Panc1 (cell line): ENCODE measurements at regions of chr2 and their contacts with region 1.

Region 1: GRCh38 chr2:231642631-231643494 is 50.2 kb downstream of the TEX44 start:
- DNase-seq: peak; percentile 88
- ATAC-seq: peak; percentile 94
- H3K4me3 ChIP-seq: peak overlapping the region; percentile 24 to 48; a peak in 3 of 4 replicates
- H3K27ac ChIP-seq: peak overlapping the region; percentile 91
- H3K4me1 ChIP-seq: peaks cover 39% of the 10 kb centered on the region
- H3K27me3 ChIP-seq: no peaks in the 10 kb centered on the region
- CTCF ChIP-seq: no peak

Region 2: DNA sequence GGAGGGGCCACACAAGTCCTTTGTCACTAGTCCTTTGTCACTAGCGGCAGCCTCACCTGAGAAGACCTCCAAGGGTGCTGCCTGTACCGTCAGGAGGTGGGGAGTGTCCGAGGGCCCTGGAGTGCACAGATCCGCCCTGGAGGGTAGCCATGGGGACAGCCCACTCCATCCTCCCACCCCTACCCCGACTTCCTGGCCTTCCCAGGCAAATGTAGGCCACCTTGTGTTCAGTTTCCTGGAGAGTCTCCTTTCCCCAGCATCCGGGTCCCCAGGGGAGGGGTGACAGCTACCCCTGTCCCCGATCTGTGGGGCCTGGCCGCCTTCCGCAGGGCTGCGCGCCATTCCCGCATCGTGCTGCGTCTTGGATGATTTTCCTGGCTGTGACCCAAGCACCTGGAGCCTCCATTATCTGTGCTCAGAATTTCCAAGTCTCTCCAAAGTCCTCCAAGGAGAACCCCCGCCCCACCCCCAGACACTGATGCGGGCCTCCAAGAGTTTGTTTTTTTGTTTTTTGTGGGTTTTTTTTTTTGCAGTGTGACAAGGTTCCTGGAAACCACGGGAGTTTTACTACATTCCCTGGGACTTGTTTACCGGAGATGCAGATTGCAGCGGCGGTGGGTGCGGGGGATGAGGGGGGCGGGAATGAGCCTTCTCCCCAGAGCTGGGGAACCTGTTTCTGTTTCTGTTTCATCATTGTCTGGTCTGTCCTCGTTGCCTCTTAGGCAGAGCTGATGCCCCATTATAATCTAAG is 21.6 kb before region 1 on chr2:
- CTCF ChIA-PET with region 1: interaction called, 11 read pairs
- POLR2A ChIA-PET with region 1: no interaction called
- in situ Hi-C with region 1: no loop called
- intact Hi-C with region 1: no loop called
- DNase-seq: no peak
- ATAC-seq: peak; percentile 54
- H3K4me3 ChIP-seq: peak overlapping the region; percentile 10 to 29; a peak in 3 of 4 replicates
- H3K27ac ChIP-seq: peak overlapping the region; percentile 83
- H3K4me1 ChIP-seq: peaks cover 42% of the 10 kb centered on the region
- H3K27me3 ChIP-seq: no peaks in the 10 kb centered on the region
- CTCF ChIP-seq: no peak

Region 3: DNA sequence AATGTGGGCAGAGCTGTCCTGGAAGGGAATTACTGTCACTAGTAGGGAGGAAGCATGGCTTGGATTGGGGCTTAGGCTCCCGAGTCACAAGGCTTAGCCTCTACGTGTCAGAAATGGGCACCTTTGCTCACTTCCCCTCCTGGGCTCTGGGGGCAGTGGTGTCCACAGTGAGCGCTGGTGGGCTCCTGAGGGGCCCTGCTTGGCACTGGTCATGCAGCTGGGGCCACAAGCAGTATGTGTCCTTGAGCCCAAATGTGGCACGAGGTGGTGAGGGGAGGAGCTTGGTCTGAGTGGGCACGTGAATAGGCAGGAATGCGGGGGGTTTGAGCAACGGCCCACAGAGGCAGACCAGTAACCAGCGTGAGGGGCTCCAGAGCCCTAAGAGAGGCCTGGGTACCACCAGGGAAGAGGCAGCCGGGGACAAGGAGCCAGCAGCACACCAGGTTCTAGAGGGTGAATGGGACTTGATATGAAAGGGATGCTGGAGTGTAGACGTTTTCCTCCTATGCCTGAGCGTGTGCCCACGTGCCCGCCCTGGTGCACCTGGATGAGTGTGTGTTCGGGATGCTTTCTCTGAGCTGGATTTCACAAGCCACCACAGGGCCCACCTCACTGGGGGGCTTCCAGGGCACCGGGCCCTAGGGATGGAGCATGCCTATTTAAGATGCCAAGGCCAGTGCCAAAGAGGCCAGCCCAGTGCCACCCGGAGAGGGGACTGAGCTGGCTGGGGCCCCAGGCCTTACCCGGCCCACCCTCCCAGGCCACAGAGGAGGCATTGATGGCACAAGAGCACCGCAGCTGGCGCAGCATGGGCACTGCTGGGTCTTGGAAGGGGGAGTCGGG is 42.7 kb after region 1 on chr2:
- CTCF ChIA-PET with region 1: interaction called, 11 read pairs
- POLR2A ChIA-PET with region 1: no interaction called
- in situ Hi-C with region 1: no loop called
- intact Hi-C with region 1: no loop called
- DNase-seq: no peak
- ATAC-seq: 0 out of 2 replicates have a peak, but pooled peaks have one; percentile 10
- H3K4me3 ChIP-seq: no peak overlapping the region
- H3K27ac ChIP-seq: no peak overlapping the region
- H3K4me1 ChIP-seq: peaks cover 5% of the 10 kb centered on the region
- H3K27me3 ChIP-seq: no peaks in the 10 kb centered on the region
- CTCF ChIP-seq: peak; percentile 56

Region 4: GRCh38 chr2:231810905-231811304 is 168.0 kb after region 1 on chr2:
- CTCF ChIA-PET with region 1: no interaction called
- POLR2A ChIA-PET with region 1: no interaction called
- in situ Hi-C with region 1: no loop called
- intact Hi-C with region 1: no loop called
- DNase-seq: no peak
- ATAC-seq: peak; percentile 44; the same call in 1 of the 2 replicates
- H3K4me3 ChIP-seq: no peak overlapping the region
- H3K27ac ChIP-seq: no peak overlapping the region
- H3K4me1 ChIP-seq: no peaks in the 10 kb centered on the region
- H3K27me3 ChIP-seq: no peaks in the 10 kb centered on the region
- CTCF ChIP-seq: no peak

Region 5: GRCh38 chr2:231940795-231941194 is 297.9 kb after region 1 on chr2:
- CTCF ChIA-PET with region 1: no interaction called
- POLR2A ChIA-PET with region 1: no interaction called
- in situ Hi-C with region 1: no loop called
- intact Hi-C with region 1: no loop called
- DNase-seq: no peak
- ATAC-seq: no peak
- H3K4me3 ChIP-seq: no peak overlapping the region
- H3K27ac ChIP-seq: no peak overlapping the region
- H3K4me1 ChIP-seq: no peaks in the 10 kb centered on the region
- H3K27me3 ChIP-seq: 0 out of 2 replicates have a peak, but pooled peaks cover 2% of the 10 kb centered on the region
- CTCF ChIP-seq: no peak